GM10248 (cell line): ENCODE measurements at regions of chr1 and their contacts with region 1.

Region 1: GRCh38 chr1:24201941-24202440 is 14.9 kb upstream of the IFNLR1 start:
- DNase-seq: peak; percentile 50
- CTCF ChIP-seq: peak; percentile 85

Region 2: DNA sequence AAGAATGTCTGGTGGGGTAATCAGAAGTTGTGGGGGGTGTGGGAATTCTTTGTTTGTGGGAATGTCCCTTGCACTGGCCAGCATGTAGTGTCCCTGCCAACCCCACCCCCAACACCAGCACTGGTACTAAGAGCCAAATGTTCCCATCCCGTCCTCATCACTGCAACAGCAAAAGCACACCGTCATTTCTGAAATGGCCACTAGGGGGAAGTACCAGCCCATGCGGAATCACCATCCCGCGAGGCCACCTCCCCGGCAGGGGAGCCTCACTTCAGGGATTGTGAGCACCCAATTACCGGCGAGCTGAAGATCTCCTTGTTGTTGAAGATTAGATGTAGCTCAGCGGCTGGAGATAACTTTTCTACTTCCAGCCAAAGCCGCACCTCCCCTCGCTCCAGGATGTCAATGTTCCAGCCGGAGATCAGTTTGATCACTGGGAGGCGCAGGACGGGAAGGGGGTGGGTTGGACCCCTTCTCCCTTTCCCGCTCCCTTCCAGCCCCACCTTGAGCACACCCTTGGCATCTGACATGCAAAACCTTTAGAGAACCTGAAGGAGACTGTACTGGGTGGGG is 131.1 kb before region 1 on chr1:
- CTCF ChIA-PET with region 1: no interaction called
- POLR2A ChIA-PET with region 1: no interaction called
- DNase-seq: peak; percentile 88
- CTCF ChIP-seq: peak; percentile 75

Region 3: DNA sequence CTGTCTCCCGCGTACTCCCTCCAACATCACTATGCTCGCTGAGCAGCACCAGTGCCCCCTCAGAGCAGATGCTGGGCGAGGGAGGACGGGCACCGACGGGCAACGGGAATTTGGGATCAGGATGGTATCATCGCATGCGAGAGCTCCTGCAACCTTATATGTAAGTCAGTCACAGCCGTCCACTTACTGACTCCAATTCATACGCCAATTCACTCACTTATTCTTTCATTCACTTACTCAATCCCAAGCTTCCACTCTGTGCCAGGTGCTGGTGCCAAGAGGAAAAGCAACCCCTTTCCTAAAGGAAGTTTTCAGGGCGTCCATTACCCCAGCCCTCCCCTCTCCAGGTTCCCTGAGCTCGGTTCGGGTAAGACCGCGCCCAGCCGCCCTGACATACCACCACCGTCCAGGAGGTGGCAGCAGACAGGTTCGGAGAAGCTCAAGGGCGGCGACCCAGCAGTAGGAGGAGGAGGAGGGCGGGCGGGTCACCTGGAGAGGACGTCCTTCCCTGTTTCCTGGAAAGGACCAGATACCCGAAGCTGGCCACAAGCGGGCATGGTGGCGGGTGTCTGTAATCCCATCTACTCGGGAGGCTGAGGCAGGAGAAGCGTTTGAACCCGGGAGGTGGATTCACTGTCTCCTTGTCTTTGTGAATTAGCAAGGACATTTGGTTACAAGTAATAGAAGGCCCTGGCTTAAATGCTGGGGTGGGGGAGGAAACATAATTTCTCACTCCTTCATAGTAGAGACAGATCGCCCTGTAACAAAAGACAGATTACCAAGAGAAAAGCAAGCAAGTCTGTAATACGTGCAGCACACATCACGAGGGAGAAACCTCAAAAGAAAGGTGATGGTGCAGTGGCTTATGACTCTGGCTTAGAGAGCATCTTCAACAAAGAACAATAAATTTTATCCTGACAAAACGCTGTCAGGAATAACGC is 51.5 kb before region 1 on chr1:
- CTCF ChIA-PET with region 1: interaction called, 30 read pairs
- POLR2A ChIA-PET with region 1: interaction called, 3 read pairs
- DNase-seq: peak; percentile 86
- CTCF ChIP-seq: peak; percentile 97

Region 4: GRCh38 chr1:24216276-24217074 is 14.5 kb after region 1 on chr1:
- CTCF ChIA-PET with region 1: interaction called, 14 read pairs
- POLR2A ChIA-PET with region 1: no interaction called
- DNase-seq: no peak
- CTCF ChIP-seq: no peak

Region 5: GRCh38 chr1:24321697-24322469 is 119.9 kb after region 1 on chr1:
- CTCF ChIA-PET with region 1: interaction called, 30 read pairs
- POLR2A ChIA-PET with region 1: no interaction called
- DNase-seq: peak; percentile 83
- CTCF ChIP-seq: peak; percentile 6

Region 6: GRCh38 chr1:24385160-24385940 is 183.4 kb after region 1 on chr1:
- CTCF ChIA-PET with region 1: interaction called, 433 read pairs
- POLR2A ChIA-PET with region 1: no interaction called
- DNase-seq: no peak
- CTCF ChIP-seq: peak; percentile 44

Region 7: DNA sequence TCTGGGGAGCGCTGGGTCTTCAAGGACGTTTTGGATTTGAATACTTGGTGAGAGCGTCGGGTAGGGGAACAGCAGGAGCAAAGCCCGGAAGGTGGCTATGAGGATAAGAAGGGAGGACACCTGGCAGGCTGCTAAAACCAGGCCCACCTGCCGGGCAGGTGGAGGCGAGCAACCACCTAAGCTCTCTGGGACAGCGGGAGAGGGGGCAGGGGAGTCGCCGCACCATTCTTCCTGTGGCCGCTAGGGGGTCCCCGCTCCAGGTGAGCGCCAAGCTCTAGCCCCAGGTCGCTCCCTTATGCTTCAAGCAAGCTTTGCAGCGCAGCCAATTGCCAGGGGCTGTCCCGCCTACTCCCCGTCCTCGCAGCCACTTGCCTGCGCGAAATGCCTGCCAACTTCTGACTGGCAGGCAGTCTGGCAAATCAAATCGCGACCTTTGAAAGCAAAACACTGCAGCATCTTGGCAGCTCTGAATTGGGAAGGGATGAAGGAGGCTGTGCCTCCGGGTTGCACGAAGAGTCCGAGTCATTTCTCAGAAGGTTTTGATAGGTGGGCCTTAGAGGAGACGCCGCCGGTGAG is 213.4 kb after region 1 on chr1 and contains the start of gene NIPAL3:
- CTCF ChIA-PET with region 1: interaction called, 98 read pairs
- POLR2A ChIA-PET with region 1: no interaction called
- DNase-seq: peak; percentile 97
- CTCF ChIP-seq: peak; percentile 85